HCT116 (cell line): ENCODE measurements at regions of chr2 and their contacts with region 1.

Region 1: DNA sequence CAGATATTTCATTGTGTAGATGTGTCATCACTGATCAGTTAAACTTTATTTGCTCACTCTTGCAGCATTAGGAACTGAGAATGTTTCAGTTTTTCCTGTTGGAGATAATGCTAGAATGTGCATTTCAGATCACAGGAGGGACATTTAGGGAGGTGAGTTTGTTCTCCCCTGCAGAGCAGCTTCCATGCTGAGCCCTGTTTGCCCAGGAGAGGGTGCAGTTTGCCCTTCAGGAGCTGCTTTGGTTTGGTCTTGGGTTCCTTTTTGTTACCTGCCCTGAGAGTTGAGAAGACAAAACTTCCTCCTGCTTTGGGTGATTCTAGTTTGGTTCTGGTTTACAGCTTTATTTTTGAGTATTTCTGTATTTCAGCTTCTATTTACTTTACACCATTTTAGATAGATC is 49.9 kb downstream of the DGKD start:
- DNase-seq: peak; percentile 32
- ATAC-seq: peak; percentile 88
- H3K4me3 ChIP-seq: no peak overlapping the region
- H3K27ac ChIP-seq: no peak overlapping the region
- H3K4me1 ChIP-seq: no peaks in the 10 kb centered on the region
- H3K27me3 ChIP-seq: no peaks in the 10 kb centered on the region
- CTCF ChIP-seq: peak; percentile 79 to 93 (median 91)
- POLR2A ChIP-seq: no peak
- RAD21 ChIP-seq: peak; percentile 88

Region 2: GRCh38 chr2:233711312-233712008 is 307.2 kb after region 1 on chr2:
- CTCF ChIA-PET with region 1: interaction called, 3 read pairs
- POLR2A ChIA-PET with region 1: no interaction called
- RAD21 ChIA-PET with region 1: no interaction called
- intact Hi-C with region 1: loop called (anchors 1 kb)
- DNase-seq: peak; percentile 47
- ATAC-seq: peak; percentile 98
- H3K4me3 ChIP-seq: no peak overlapping the region
- H3K27ac ChIP-seq: no peak overlapping the region
- H3K4me1 ChIP-seq: no peaks in the 10 kb centered on the region
- H3K27me3 ChIP-seq: peaks cover 11% of the 10 kb centered on the region; the same call in 1 of the 2 replicates
- CTCF ChIP-seq: peak; percentile 61 to 97 (median 96); a peak in 5 of 6 replicates
- POLR2A ChIP-seq: no peak
- RAD21 ChIP-seq: peak; percentile 86

Region 3: DNA sequence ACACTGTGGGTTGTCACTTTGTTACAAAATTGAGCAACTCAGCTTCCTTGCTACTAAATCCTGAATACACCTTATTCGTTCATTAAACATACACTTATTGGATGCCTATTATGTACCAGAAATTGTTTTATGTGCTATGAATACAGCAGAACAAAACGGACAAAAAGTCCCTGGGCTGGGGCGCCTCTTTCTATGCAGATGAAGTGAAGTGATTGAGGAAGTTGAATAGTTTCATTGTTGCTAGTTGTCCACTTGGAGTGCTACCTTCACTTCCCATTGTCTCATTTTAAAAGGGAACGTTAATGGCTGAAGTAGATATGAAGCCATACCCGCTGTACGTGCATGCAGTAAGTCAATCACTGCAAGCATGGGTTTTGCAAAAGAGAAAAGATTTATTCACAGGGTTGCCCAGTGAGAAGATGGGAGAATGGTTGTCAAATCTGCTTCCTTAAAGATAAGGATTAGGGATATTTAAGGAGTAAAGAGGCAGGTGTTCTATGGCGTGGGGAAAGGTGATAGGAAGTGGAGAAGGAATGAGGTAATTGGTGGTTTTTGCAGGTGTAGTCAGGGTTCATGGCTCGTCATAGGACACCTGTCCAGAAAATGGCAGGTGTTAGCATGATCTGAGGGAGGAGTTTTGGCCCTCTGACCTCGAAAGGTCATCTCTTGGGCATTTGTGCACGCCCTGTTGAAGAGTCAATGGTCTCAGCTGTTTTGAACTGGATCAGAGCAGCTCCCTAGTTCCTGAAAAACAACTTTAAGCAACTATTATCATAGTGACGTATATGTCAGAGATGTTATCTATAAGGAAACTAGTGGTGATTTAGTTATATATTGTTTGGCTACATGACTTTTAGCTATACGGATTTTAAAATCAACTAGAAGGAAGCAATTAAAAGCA is 536.4 kb after region 1 on chr2:
- CTCF ChIA-PET with region 1: no interaction called
- POLR2A ChIA-PET with region 1: no interaction called
- RAD21 ChIA-PET with region 1: no interaction called
- intact Hi-C with region 1: no loop called
- DNase-seq: no peak
- ATAC-seq: no peak
- H3K4me3 ChIP-seq: no peak overlapping the region
- H3K27ac ChIP-seq: no peak overlapping the region
- H3K4me1 ChIP-seq: no peaks in the 10 kb centered on the region
- H3K27me3 ChIP-seq: no peaks in the 10 kb centered on the region
- CTCF ChIP-seq: no peak
- POLR2A ChIP-seq: no peak
- RAD21 ChIP-seq: no peak